Activated T-helper 1 cell treated with anti-CD3 and anti-CD28 coated beads, Interleukin-12 subunit alpha, Interleukin-12 subunit beta, Interleukin-2, Interleukin-4 antibody, amounts not matched to agents 30 ng/mL and 10 ng/mL and 1 ng/mL, durations not matched to agents 14 hours and 24 hours and 36 hours (primary cell): ENCODE measurements at regions of chr12 and their contacts with region 1.

Region 1: GRCh38 chr12:57846577-57847319 is at the start of gene CTDSP2:
- DNase-seq: peak; percentile 85
- H3K4me3 Mint-ChIP-seq: peak within 1 kb of the TSS; percentile 85
- H3K27ac Mint-ChIP-seq: peak within 1 kb of the TSS; percentile 68
- H3K4me1 Mint-ChIP-seq: peaks cover 43% of the 10 kb centered on the region
- H3K27me3 Mint-ChIP-seq: peaks cover 18% of the 10 kb centered on the region
- total RNA-seq, gene CTDSP2: 96.5 and 99.6 TPM in 2 replicates

Region 2: GRCh38 chr12:57476162-57476992 is 370.4 kb before region 1 on chr12:
- intact Hi-C with region 1: loop called (anchors 5 kb)
- DNase-seq: peak; percentile 67
- H3K4me3 Mint-ChIP-seq: peak overlapping the region; percentile 93
- H3K27ac Mint-ChIP-seq: peak overlapping the region; percentile 97
- H3K4me1 Mint-ChIP-seq: peaks cover 54% of the 10 kb centered on the region
- H3K27me3 Mint-ChIP-seq: no peaks in the 10 kb centered on the region

Region 3: DNA sequence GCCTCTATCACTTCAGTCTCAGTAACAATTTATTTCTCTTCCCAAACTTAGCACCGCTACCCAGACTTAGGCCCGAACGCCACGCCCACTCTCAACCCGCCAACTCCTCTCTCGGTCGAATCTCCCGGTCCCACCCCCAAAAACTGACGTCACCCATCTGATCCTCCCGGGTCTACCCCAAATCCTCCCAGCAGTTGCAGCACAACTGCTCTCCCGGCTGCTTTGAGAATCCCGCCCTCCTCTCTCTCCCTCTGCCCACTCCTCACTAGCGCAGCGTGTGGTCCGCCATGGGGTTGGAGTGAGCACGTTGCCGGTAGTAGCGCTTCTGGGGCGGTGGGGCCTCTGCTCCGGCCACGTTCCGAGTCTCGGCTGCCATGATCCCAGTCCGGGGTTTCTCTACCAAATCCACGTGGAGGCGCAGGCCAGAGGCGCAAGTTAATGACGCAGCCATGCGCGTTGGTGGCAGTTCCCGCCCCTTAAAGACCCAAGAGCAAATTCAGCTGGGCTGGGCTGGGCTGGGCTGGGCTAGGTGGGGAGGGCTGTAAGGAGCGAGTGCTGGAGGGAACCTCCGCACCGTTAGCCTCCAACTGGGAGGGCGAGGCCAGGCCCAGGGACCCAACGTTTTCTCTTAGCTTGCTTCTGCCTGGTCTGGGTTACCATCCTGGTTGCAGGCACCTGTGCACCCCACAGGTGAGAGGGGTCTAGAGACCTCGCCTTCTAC is 74.9 kb before region 1 on chr12 and contains the start of gene METTL1:
- intact Hi-C with region 1: loop called (anchors 1 kb)
- DNase-seq: peak; percentile 90
- H3K4me3 Mint-ChIP-seq: peak within 1 kb of the TSS; percentile 93
- H3K27ac Mint-ChIP-seq: peak within 1 kb of the TSS; percentile 99
- H3K4me1 Mint-ChIP-seq: peaks cover 40% of the 10 kb centered on the region
- H3K27me3 Mint-ChIP-seq: no peaks in the 10 kb centered on the region
- total RNA-seq, gene METTL1: 89.7 and 90.0 TPM in 2 replicates

Region 4: GRCh38 chr12:57836442-57837375 is 10.0 kb before region 1 on chr12:
- intact Hi-C with region 1: loop called (anchors 1 kb)
- DNase-seq: peak; percentile 33
- H3K4me3 Mint-ChIP-seq: peak overlapping the region; percentile 47
- H3K27ac Mint-ChIP-seq: peak overlapping the region; percentile 87
- H3K4me1 Mint-ChIP-seq: peaks cover 84% of the 10 kb centered on the region
- H3K27me3 Mint-ChIP-seq: no peaks in the 10 kb centered on the region

Region 5: GRCh38 chr12:57899010-57899662 is 52.4 kb after region 1 on chr12:
- intact Hi-C with region 1: loop called (anchors 1 kb)
- DNase-seq: peak; percentile 66
- H3K4me3 Mint-ChIP-seq: peak overlapping the region; percentile 75
- H3K27ac Mint-ChIP-seq: peak overlapping the region; percentile 96
- H3K4me1 Mint-ChIP-seq: peaks cover 64% of the 10 kb centered on the region
- H3K27me3 Mint-ChIP-seq: no peaks in the 10 kb centered on the region

Region 6: GRCh38 chr12:57935839-57936512 is 89.2 kb after region 1 on chr12:
- intact Hi-C with region 1: loop called (anchors 1 kb)
- DNase-seq: peak; percentile 92
- H3K4me3 Mint-ChIP-seq: peak overlapping the region; percentile 94
- H3K27ac Mint-ChIP-seq: peak overlapping the region; percentile 99
- H3K4me1 Mint-ChIP-seq: peaks cover 36% of the 10 kb centered on the region
- H3K27me3 Mint-ChIP-seq: no peaks in the 10 kb centered on the region

Region 7: GRCh38 chr12:58225203-58225877 is 378.6 kb after region 1 on chr12:
- intact Hi-C with region 1: no loop called
- DNase-seq: no peak
- H3K4me3 Mint-ChIP-seq: no peak overlapping the region
- H3K27ac Mint-ChIP-seq: no peak overlapping the region
- H3K4me1 Mint-ChIP-seq: no peaks in the 10 kb centered on the region
- H3K27me3 Mint-ChIP-seq: no peaks in the 10 kb centered on the region

Region 8: GRCh38 chr12:58425481-58426392 is 579.0 kb after region 1 on chr12:
- intact Hi-C with region 1: loop called (anchors 5 kb)
- DNase-seq: peak; percentile 9
- H3K4me3 Mint-ChIP-seq: peak overlapping the region; percentile 58
- H3K27ac Mint-ChIP-seq: peak overlapping the region; percentile 87
- H3K4me1 Mint-ChIP-seq: peaks cover 43% of the 10 kb centered on the region
- H3K27me3 Mint-ChIP-seq: peaks cover 28% of the 10 kb centered on the region